AG04449 (cell line): ENCODE measurements at regions of chr1 and their contacts with region 1.

Region 1: DNA sequence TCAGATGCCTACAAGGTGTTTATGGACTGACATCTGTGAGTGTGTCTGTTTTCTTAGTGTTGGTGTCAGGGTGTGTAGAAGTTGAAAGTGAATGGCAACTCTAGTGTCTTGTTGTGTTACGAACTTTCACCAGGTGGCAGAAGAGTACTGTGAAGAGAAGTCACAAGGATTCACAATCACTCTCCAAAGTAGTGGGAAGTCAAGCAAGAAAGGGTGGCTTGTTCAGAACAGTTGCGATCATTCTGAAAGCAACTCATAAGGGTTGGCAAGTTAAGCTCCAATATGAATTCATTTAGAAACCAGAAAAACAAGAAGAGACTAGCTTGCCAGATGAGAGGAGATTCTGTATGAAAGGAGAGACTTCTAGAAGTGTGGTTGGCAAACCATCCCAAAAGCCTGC is 86.1 kb downstream of the FASLG start:
- DNase-seq: peak; percentile 40
- H3K4me3 ChIP-seq: no peak overlapping the region
- CTCF ChIP-seq: peak; percentile 61

Region 2: DNA sequence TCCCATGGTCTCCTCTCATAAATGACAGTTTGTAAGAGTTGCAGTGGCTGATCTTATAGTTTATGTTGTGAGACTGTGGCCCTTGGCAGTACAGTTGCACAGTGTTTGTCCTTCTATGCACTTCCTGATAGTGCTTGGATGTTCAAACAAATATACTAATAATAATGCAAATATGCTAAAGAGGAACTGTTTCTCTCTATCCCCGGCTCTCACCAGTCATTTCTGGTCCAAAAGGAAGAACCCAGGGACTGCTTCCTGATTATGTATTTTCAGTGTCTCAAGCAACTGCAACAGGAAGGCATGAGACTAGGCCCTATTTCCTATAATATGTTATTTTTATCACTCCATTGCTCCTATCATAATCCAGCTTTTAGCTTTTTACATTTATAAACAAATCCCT is 229.1 kb before region 1 on chr1:
- CTCF ChIA-PET with region 1: no interaction called
- POLR2A ChIA-PET with region 1: no interaction called
- DNase-seq: no peak
- H3K4me3 ChIP-seq: no peak overlapping the region
- CTCF ChIP-seq: no peak

Region 3: DNA sequence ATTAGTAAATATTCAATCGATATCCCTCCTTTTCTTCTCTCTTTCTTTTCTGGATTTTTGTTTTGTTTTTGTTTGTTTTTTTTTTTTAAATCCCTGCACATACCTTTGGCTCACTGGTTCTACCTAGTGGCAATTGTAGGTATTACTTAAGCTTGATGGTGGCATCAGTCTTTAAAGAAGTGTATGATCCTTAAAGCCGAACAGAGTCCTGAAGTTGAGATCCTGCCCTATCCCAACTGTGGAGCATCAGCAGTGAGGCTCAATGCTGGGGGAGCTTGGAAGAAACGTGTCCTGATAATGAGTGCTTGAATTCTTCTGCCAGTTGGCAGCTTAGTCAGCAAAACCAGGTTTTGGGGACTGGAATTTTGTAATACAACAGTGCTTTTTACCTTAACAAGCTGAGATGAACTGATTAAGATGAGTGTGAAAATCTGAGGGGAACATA is 25.3 kb before region 1 on chr1:
- CTCF ChIA-PET with region 1: interaction called, 22 read pairs
- POLR2A ChIA-PET with region 1: no interaction called
- DNase-seq: no peak
- H3K4me3 ChIP-seq: no peak overlapping the region
- CTCF ChIP-seq: peak; percentile 51

Region 4: GRCh38 chr1:172733815-172734214 is 11.2 kb before region 1 on chr1:
- CTCF ChIA-PET with region 1: interaction called, 36 read pairs
- POLR2A ChIA-PET with region 1: no interaction called
- DNase-seq: no peak
- H3K4me3 ChIP-seq: no peak overlapping the region
- CTCF ChIP-seq: no peak

Region 5: DNA sequence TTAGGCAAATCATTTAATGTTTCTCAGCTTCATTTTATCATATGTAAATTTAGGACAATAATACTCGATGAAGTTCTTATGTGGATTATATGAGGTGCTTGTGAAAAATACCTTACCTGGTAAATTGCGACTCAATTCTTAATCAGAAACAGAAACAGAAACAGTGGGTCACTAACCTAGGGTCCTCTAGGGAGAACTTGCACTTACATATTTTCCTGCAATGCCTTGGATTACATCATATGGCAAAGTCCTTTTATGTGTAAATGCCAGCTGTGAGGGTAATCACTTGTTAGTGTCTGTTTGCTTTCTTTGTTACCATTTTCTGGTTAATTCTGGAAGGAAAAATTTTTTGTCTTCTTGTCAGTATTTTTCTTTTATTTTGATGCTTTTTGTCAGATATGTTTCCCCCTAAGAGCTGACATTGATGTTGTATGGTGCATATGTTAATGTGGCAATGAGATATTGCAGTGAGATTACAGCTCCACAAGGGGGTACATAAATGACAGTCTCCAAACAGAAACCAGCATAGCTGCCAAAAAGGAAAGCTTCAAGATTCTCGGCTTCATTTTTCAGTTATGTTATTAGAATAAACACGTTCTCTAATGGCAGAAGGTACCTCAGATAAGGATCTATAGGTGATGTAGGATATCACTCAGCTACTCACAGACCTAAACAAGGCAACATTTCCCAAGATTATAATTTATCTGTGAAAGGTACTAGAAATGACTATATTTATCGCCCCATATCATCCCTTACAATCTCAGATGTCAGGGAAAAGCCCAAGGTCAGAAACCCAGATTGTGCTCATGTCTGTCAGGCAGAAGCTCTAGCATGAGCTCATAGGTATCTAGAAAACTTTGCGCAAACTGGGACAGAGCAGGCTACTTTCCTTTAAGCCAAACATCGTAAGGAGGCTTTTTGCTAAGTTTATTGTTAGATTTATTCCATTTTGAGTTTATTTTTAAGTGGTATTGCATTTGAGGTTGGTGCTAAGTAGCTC is 33.7 kb after region 1 on chr1:
- CTCF ChIA-PET with region 1: interaction called, 11 read pairs
- POLR2A ChIA-PET with region 1: no interaction called
- DNase-seq: no peak
- H3K4me3 ChIP-seq: no peak overlapping the region
- CTCF ChIP-seq: no peak

Region 6: DNA sequence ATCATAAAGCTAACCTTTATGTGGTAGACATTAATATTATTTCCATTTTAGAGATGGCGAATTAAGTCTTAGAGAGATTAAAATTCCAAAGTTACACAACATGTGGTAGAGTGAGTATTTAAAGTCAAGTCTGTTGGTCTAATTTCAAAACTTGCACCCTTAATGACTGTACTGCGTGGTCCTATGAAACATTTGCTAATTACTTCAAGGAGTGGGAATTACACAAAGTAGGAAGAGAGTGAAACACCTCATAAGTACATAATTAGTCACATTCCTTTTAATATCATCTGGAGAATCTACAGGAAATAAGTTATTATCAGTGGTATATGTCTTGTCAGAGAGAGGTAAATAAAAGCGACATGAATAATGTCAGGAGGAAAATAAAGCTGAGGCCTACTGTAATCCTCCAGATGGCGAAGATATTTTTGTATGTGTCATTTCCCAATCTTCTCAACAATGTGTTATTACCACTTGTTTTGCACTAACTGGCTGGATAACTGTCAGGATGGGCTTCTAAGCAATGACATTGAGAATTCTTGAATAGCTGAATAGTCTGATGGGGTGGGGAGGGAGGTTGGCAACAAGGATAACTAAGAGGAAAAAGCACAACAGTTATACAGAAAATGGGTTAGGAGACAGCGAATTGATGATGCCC is 210.3 kb after region 1 on chr1:
- CTCF ChIA-PET with region 1: interaction called, 15 read pairs
- POLR2A ChIA-PET with region 1: interaction called, 4 read pairs
- DNase-seq: peak; percentile 87
- H3K4me3 ChIP-seq: no peak overlapping the region
- CTCF ChIP-seq: no peak

Region 7: DNA sequence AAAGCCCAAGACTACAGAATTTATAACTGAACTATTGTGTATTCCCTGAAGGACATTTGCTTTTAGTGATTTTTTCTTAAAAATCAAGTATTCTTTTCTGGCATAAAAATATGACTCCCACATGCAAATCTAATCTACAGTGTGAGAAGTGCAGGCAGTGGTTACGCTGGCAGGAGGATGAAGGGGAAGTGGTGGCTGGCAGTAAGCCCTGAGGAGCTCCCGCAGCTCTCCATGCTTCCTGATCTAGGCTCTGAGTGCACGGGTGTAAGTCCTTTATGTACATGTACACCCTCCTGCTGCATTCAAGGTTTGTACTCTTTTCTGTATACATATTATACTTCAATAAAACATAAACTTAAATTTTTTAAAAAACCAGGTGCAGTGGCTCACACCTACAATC is 664.6 kb after region 1 on chr1:
- CTCF ChIA-PET with region 1: interaction called, 12 read pairs
- POLR2A ChIA-PET with region 1: no interaction called
- DNase-seq: peak; percentile 44
- H3K4me3 ChIP-seq: no peak overlapping the region
- CTCF ChIP-seq: no peak

Region 8: GRCh38 chr1:173824331-173825081 is 1079.5 kb after region 1 on chr1 and contains the starts of genes CENPL and DARS2:
- CTCF ChIA-PET with region 1: interaction called, 12 read pairs
- POLR2A ChIA-PET with region 1: no interaction called
- DNase-seq: peak; percentile 90
- H3K4me3 ChIP-seq: peak within 1 kb of the TSS; percentile 97
- CTCF ChIP-seq: no peak